ENCODE measurements at regions of chr19 and their contacts with region 1.

Region 1: DNA sequence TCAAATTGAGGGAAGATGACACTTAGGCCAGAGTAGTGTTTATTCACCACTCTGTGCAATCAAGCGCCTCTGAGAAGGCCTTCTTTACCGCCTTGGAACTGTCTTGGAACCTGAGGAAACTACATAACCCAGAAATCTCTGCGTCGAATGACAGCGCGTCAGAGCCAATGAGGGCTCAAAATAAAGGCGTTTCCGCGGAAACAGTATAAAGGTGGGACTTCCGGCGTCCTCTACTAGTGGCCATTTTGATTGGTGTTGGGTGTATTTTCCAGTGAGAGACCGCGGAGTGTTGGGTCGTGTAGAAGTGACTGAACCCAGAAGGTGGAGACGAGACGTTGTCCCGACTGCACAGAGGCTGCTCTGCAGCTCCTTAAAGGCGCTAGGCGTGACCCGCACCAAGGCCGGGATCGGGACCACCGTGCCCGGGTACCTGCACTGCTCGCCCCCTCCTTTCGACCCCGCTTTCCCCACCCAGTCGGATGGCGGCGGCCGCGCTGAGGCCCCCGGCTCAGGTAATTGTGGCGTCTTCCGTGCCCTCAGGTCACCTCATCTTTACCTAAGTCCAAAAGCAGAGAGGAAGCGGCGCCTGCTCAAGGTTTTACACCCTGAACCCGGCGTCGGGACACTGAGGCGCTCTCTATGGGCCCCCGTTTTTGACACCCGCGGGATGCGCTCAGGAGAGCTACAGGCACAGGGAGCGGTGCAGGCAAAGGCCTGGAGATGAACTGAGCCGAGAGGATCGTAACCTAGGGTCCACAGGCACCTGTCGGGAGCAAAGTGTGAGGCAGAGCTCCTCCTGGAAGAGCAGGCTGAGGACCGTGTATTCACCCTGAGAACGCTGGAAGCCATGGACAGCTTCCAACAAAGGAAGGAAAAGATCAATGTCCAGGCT is at the start of gene ZNF776:
- DNase-seq: peak; percentile 50 to 92 (median 82)
- ATAC-seq: peak; percentile 95 to 98
- H3K4me3 Mint-ChIP-seq: peak within 1 kb of the TSS; percentile 87 to 100 (median 94)
- H3K27ac Mint-ChIP-seq: peak within 1 kb of the TSS; percentile 92 to 100 (median 98)
- H3K4me1 Mint-ChIP-seq: peaks cover 9 to 39% (median 32%) of the 10 kb centered on the region in 4 donors
- H3K27me3 Mint-ChIP-seq: no peaks in the 10 kb centered on the region
- polyA plus RNA-seq, gene ZNF776: 8.2 to 11.9 (median 8.4) TPM

Region 2: GRCh38 chr19:57682226-57682766 is 64.5 kb before region 1 on chr19:
- POLR2A ChIA-PET with region 1: interaction called, 13 read pairs
- DNase-seq: no peak
- ATAC-seq: no peak
- H3K4me3 Mint-ChIP-seq: peak overlapping the region; percentile 96 to 99 (median 98)
- H3K27ac Mint-ChIP-seq: peak overlapping the region; percentile 94 to 99 (median 98)
- H3K4me1 Mint-ChIP-seq: peaks cover 26 to 41% (median 38%) of the 10 kb centered on the region in 4 donors
- H3K27me3 Mint-ChIP-seq: peaks cover 3 to 14% (median 5%) of the 10 kb centered on the region in 5 donors

Region 3: DNA sequence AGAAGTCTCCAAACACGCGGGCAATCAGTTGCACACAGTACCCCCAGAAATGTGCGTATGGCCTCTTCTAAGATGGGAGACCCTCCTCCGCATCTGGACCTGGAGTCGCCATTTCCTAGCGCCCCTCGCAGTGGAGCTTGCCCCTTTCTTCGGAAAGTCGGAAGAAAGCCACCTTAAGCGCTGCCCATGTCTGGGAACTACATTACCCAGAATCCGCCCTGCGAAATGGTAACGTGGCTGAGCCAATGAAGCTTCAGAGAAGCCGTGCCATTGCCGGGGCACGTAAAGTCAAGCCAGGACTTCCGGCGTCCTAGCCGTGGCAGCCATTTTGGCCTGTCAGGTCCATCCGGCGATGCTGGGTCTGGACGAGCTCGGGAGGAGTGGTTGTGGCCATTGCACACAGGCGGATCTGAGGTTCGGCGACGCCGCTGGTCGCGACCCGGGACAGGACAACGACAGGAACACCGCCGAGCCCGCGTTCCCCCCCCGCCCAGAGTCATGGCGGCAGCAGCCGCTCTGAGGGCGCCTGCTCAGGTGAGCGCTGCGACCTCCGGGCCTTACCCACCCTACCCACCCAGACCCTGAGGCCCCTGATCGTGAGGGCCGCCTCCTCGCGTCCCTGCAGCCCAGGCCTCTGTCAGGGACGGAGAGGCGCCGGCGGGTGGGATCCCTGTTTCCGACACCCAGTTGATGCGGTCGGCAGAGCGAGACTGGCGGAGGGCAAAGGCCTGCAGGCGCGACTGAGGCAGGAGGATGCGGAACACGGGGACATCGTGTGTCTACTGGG is 22.7 kb after region 1 on chr19 and contains the start of gene ZNF586:
- POLR2A ChIA-PET with region 1: interaction called, 16 read pairs
- DNase-seq: peak; percentile 72 to 92 (median 83)
- ATAC-seq: peak; percentile 98 to 100
- H3K4me3 Mint-ChIP-seq: peak within 1 kb of the TSS; percentile 84 to 98 (median 95)
- H3K27ac Mint-ChIP-seq: peak within 1 kb of the TSS; percentile 89 to 99 (median 96)
- H3K4me1 Mint-ChIP-seq: peaks cover 14 to 39% (median 30%) of the 10 kb centered on the region in 4 donors
- H3K27me3 Mint-ChIP-seq: no peaks in the 10 kb centered on the region
- polyA plus RNA-seq, gene ZNF586: 17.7 to 21.5 (median 20.3) TPM

Region 4: DNA sequence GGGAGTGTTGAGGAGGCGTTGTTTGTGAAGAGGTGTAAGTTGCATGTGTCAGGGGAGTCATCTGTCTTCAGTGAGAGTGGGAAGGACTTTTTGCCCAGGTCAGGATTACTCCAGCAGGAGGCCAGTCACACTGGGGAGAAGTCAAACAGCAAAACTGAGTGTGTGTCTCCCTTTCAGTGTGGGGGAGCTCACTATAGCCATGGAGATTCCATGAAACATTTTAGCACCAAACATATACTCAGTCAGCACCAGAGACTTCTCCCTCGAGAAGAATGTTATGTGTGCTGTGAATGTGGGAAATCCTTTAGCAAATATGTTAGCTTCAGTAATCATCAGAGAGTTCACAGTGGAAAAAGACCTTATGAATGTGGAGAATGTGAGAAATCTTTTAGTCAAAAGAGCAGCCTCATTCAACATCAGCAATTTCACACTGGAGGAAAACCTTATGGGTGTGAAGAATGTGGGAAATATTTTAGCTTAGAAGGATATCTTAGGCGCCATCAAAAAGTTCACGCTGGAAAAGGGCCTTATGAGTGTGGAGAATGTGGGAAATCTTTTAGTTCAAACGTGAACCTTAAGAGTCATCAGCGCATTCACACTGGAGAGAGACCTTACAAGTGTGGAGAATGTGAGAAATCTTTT is 94.4 kb after region 1 on chr19:
- POLR2A ChIA-PET with region 1: no interaction called
- DNase-seq: no peak
- ATAC-seq: no peak
- H3K4me3 Mint-ChIP-seq: no peak overlapping the region
- H3K27ac Mint-ChIP-seq: peak overlapping the region in 1 of 10 donors; percentile 19
- H3K4me1 Mint-ChIP-seq: peaks cover 14 to 24% (median 16%) of the 10 kb centered on the region in 4 donors
- H3K27me3 Mint-ChIP-seq: no peaks in the 10 kb centered on the region

Measured in naive thymus-derived CD8-positive, alpha-beta T cell (primary cell).